Colonic mucosa (tissue), 4 donors: ENCODE measurements at regions of chr10 and their contacts with region 1.

Region 1: GRCh38 chr10:97072851-97073665 is 112.7 kb downstream of the SLIT1 start:
- DNase-seq: peak; percentile 77
- H3K4me3 ChIP-seq: no peak overlapping the region
- H3K27ac ChIP-seq: no peak overlapping the region
- H3K4me1 ChIP-seq: no peaks in the 10 kb centered on the region
- H3K27me3 ChIP-seq: no peaks in the 10 kb centered on the region
- CTCF ChIP-seq: peak; percentile 92

Region 2: GRCh38 chr10:97117372-97117771 is 44.3 kb after region 1 on chr10:
- intact Hi-C with region 1: loop called (anchors 5 kb)
- DNase-seq: peak; percentile 20
- H3K4me3 ChIP-seq: no peak overlapping the region
- H3K27ac ChIP-seq: no peak overlapping the region
- H3K4me1 ChIP-seq: no peaks in the 10 kb centered on the region
- H3K27me3 ChIP-seq: no peaks in the 10 kb centered on the region
- CTCF ChIP-seq: peak; percentile 24

Region 3: DNA sequence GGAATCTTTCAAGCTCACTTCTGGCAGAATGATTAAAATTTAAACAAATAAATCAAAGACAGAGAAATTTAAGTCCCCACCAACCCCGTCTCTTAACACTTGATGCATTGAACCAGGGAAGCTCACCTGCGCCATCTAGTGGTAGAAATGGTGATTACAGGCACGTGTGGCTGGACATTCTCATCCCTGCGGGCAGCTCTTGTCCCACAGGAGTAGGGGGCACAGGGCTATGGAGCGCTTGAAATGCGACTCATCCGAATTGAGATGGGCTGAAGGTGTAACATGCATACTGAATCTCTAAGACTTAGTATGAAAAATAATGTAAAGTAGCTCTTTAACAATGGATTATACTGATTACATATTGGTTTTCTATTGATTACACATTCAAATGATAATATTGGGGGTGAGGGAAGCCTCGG is 137.5 kb after region 1 on chr10:
- intact Hi-C with region 1: loop called (anchors 1 kb)
- DNase-seq: peak; percentile 70
- H3K4me3 ChIP-seq: no peak overlapping the region
- H3K27ac ChIP-seq: no peak overlapping the region
- H3K4me1 ChIP-seq: no peaks in the 10 kb centered on the region
- H3K27me3 ChIP-seq: no peaks in the 10 kb centered on the region
- CTCF ChIP-seq: peak; percentile 96

Region 4: GRCh38 chr10:97355571-97355975 is 282.5 kb after region 1 on chr10:
- intact Hi-C with region 1: no loop called
- DNase-seq: peak; percentile 29
- H3K4me3 ChIP-seq: no peak overlapping the region
- H3K27ac ChIP-seq: no peak overlapping the region
- H3K4me1 ChIP-seq: no peaks in the 10 kb centered on the region
- H3K27me3 ChIP-seq: no peaks in the 10 kb centered on the region
- CTCF ChIP-seq: peak; percentile 28